IMR-90 (cell line): ENCODE measurements at regions of chr6 and their contacts with region 1.

Region 1: GRCh38 chr6:26065952-26066380 is 21.3 kb upstream of the HFE start:
- DNase-seq: peak; percentile 82
- ATAC-seq: peak; percentile 98
- H3K4me3 ChIP-seq: no peak overlapping the region
- H3K27ac ChIP-seq: peak overlapping the region; percentile 33; the same call in 1 of the 2 replicates
- H3K4me1 ChIP-seq: no peaks in the 10 kb centered on the region
- H3K27me3 ChIP-seq: no peaks in the 10 kb centered on the region
- CTCF ChIP-seq: peak; percentile 96
- POLR2A ChIP-seq: no peak
- RAD21 ChIP-seq: peak; percentile 90

Region 2: DNA sequence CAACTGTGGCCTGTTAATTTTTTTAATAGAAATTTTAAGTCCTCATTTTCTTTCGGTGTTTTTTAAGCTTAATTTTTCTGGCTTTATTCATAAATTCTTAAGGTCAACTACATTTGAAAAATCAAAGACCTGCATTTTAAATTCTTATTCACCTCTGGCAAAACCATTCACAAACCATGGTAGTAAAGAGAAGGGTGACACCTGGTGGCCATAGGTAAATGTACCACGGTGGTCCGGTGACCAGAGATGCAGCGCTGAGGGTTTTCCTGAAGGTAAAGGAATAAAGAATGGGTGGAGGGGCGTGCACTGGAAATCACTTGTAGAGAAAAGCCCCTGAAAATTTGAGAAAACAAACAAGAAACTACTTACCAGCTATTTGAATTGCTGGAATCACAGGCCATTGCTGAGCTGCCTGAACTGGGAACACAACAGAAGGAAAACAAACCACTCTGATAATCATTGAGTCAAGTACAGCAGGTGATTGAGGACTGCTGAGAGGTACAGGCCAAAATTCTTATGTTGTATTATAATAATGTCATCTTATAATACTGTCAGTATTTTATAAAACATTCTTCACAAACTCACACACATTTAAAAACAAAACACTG is 31.4 kb after region 1 on chr6:
- CTCF ChIA-PET with region 1: interaction called, 8 read pairs
- POLR2A ChIA-PET with region 1: interaction called, 3 read pairs
- dilution Hi-C with region 1: no loop called
- in situ Hi-C with region 1: loop called (anchors 5 kb)
- intact Hi-C with region 1: loop called (anchors 1 kb)
- DNase-seq: peak; percentile 69
- ATAC-seq: peak; percentile 85
- H3K4me3 ChIP-seq: no peak overlapping the region
- H3K27ac ChIP-seq: no peak overlapping the region
- H3K4me1 ChIP-seq: no peaks in the 10 kb centered on the region
- H3K27me3 ChIP-seq: no peaks in the 10 kb centered on the region
- CTCF ChIP-seq: peak; percentile 80
- POLR2A ChIP-seq: no peak
- RAD21 ChIP-seq: peak; percentile 78

Region 3: GRCh38 chr6:26103770-26104456 is 37.9 kb after region 1 on chr6:
- CTCF ChIA-PET with region 1: interaction called, 6 read pairs
- POLR2A ChIA-PET with region 1: no interaction called
- dilution Hi-C with region 1: no loop called
- in situ Hi-C with region 1: loop called (anchors 5 kb)
- intact Hi-C with region 1: no loop called
- DNase-seq: peak; percentile 95
- ATAC-seq: peak; percentile 83
- H3K4me3 ChIP-seq: peak overlapping the region; percentile 45
- H3K27ac ChIP-seq: peak overlapping the region; percentile 52
- H3K4me1 ChIP-seq: peaks cover 5% of the 10 kb centered on the region; the same call in 1 of the 2 replicates
- H3K27me3 ChIP-seq: no peaks in the 10 kb centered on the region
- CTCF ChIP-seq: peak; percentile 39
- POLR2A ChIP-seq: peak; percentile 99
- RAD21 ChIP-seq: peak; percentile 44